ENCODE measurements at regions of chr7 and their contacts with region 1.

Region 1: DNA sequence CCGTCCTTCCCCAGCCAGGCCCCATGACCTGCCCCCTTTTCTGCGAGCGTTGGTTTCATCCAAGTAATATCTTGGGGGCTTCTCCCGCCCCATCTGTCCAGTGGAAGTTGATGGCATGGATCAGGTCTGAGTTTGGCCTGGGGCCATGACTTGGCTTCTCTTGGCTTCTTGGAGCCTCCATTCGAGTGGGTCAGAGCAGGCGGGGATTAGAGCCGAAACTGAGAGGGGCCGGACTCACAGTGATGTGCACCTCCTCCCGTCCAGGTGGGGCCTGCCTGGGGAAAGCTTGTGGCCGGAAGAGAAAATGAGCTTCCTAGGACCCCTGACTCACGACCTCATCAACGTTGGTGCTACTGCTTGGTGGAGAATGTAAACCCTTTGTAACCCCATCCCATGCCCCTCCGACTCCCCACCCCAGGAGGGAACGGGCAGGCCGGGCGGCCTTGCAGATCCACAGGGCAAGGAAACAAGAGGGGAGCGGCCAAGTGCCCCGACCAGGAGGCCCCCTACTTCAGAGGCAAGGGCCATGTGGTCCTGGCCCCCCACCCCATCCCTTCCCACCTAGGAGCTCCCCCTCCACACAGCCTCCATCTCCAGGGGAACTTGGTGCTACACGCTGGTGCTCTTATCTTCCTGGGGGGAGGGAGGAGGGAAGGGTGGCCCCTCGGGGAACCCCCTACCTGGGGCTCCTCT is 15.1 kb upstream of the LIMK1 start:
- DNase-seq: no peak
- ATAC-seq: no peak
- H3K4me3 Mint-ChIP-seq: no peak overlapping the region
- H3K27ac Mint-ChIP-seq: no peak overlapping the region
- H3K4me1 Mint-ChIP-seq: 0 out of 2 replicates have a peak, but pooled peaks cover 2% of the 10 kb centered on the region
- H3K27me3 Mint-ChIP-seq: no peaks in the 10 kb centered on the region; the same call in 1 of the 2 replicates
- CTCF ChIP-seq: no peak

Region 2: DNA sequence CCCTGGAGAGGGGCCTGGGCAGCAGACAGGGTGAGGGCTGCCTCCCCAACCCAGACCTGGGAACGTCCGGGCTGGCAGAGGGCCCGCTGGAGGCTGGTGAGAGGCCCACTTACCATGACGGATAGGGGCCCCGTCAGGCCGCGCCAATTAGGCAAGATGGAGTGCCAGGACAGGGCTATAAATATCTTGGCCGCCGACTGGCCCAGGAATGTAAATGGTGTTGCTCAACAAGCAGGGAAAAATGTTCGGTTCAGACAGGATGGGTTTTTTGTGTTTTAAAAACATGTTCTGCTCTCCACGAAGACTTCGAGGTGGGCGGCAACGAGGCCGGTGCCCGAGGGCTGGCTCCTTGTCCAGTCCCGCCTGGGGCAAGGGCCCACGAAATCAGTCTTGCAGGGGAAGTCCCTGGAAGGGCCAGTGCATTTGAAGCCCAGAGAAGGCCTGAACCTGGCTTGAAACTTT is 76.4 kb before region 1 on chr7:
- CTCF ChIA-PET with region 1: no interaction called
- POLR2A ChIA-PET with region 1: no interaction called
- DNase-seq: no peak
- ATAC-seq: no peak
- H3K4me3 Mint-ChIP-seq: no peak overlapping the region
- H3K27ac Mint-ChIP-seq: no peak overlapping the region
- H3K4me1 Mint-ChIP-seq: no peaks in the 10 kb centered on the region
- H3K27me3 Mint-ChIP-seq: peaks cover 5% of the 10 kb centered on the region; the same call in 1 of the 2 replicates
- CTCF ChIP-seq: no peak

Region 3: DNA sequence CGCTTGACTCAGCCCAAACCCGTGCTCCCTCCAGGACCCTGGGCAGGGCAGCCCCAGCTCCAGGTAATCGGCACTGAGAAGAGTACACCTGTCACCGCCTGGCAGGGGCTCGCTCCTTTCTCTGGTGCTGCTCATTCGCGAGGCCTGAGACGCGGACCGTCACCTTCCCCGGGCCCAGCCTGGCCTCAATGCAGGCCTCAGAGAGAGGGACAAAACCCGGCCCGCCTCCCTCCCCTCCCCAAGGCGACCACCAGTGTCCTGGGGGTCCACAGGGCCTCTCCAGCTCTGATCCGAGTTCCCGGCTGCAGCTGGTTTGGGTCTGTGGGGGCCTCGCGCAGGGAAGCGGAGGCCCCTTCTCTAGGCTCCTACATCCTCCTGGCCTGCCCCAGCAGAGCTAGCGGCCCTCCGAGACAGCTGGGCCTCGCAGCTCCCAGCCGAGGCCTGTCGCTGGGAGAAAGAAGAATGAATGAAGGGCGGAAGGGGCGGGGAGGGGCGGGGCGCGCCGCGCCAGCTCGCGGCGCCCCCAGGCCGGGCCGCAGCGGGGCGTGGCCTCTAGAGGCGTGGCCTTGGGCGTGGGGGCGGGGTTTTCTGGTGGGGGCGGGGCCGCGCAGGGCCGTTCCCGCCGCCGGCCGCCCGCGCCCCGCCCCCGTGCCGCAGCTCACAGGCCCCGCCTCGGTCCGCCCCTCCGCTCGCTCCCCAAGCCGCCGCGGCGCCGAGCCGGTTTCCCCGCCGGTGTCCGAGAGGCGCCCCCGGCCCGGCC is 14.8 kb after region 1 on chr7 and contains the start of gene LIMK1:
- CTCF ChIA-PET with region 1: interaction called, 10 read pairs
- POLR2A ChIA-PET with region 1: interaction called, 5 read pairs
- DNase-seq: peak; percentile 75
- ATAC-seq: peak; percentile 70
- H3K4me3 Mint-ChIP-seq: peak within 1 kb of the TSS; percentile 76
- H3K27ac Mint-ChIP-seq: no peak within 1 kb of the TSS; the same call in 1 of the 2 replicates
- H3K4me1 Mint-ChIP-seq: peaks cover 26% of the 10 kb centered on the region
- H3K27me3 Mint-ChIP-seq: no peaks in the 10 kb centered on the region; the same call in 1 of the 2 replicates
- CTCF ChIP-seq: no peak
- total RNA-seq, gene LIMK1: 85.4 to 92.1 TPM (median 90.6 TPM) in 3 replicates

Region 4: DNA sequence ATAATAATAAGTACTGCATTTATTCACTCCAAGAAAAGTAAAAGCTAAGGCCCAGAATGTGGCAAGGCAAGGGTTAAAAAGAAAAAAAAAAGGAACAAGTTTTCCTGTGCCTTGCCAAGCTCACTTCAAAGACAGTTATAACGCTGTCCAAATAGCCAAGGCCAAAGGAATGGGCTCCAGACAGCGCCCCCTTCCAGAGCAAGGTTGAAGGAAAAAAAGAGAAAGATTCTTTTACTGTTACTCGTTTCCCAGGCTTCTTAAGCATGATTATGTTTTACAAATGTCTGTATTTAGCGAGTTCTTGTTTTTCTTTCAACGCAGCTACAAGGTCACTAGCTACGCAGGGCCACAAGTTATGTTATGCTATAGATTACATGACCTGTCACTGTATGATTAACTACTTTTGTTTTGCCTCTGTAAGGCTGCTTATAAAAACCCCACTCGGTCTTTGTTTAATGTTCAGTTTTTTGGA is 96.5 kb after region 1 on chr7:
- CTCF ChIA-PET with region 1: interaction called, 14 read pairs
- POLR2A ChIA-PET with region 1: interaction called, 4 read pairs
- DNase-seq: peak; percentile 49
- ATAC-seq: peak; percentile 62
- H3K4me3 Mint-ChIP-seq: no peak overlapping the region
- H3K27ac Mint-ChIP-seq: 0 out of 2 replicates have a peak overlapping the region, but pooled peaks have one; percentile 65
- H3K4me1 Mint-ChIP-seq: 0 out of 2 replicates have a peak, but pooled peaks cover 4% of the 10 kb centered on the region
- H3K27me3 Mint-ChIP-seq: no peaks in the 10 kb centered on the region
- CTCF ChIP-seq: no peak

Region 5: DNA sequence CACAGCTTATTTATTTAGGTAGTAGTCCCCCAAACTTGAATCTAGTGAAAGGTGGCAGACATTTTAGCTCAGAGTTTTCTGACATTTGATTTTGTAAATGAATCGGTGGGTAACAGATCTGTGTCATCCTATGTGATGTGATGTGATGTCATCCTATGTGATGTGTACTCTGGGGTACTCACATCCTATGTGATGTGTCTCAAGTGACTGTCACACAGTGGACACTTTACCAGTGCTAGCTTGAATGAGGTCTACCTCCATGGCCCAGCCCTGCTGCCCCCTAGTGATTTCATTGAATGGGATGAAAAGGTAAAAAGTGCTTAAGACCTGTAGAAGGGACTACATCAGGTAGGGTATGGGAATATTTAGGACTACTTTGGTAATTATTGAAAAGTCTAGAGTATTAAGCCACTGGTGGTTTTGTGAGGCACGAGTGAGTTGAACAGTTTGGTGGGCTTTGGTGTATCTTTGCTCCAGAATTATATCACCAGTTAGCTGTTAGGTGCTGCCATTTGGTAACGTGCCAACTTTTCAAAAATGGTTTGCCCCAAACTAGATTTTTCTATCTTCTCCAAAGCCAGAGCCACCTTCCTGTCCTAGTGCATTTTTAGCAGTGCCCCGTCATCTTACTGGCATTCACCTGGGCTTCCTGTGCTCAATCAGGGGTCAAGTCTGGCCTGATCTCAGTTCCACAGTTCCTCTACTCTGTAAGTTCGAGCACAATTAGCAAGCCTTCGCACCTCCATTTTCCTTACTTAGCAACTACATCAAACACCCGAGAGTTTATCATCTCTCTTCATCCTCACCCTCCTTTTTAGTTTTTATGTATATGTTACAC is 115.3 kb after region 1 on chr7:
- CTCF ChIA-PET with region 1: interaction called, 22 read pairs
- POLR2A ChIA-PET with region 1: no interaction called
- DNase-seq: peak; percentile 35
- ATAC-seq: peak; percentile 75
- H3K4me3 Mint-ChIP-seq: no peak overlapping the region
- H3K27ac Mint-ChIP-seq: peak overlapping the region; percentile 47
- H3K4me1 Mint-ChIP-seq: peaks cover 49% of the 10 kb centered on the region
- H3K27me3 Mint-ChIP-seq: no peaks in the 10 kb centered on the region
- CTCF ChIP-seq: no peak

Measured in WTC11 (cell line).